Endothelial cell of umbilical vein (primary cell): ENCODE measurements at regions of chr16 and their contacts with region 1.

Region 1: DNA sequence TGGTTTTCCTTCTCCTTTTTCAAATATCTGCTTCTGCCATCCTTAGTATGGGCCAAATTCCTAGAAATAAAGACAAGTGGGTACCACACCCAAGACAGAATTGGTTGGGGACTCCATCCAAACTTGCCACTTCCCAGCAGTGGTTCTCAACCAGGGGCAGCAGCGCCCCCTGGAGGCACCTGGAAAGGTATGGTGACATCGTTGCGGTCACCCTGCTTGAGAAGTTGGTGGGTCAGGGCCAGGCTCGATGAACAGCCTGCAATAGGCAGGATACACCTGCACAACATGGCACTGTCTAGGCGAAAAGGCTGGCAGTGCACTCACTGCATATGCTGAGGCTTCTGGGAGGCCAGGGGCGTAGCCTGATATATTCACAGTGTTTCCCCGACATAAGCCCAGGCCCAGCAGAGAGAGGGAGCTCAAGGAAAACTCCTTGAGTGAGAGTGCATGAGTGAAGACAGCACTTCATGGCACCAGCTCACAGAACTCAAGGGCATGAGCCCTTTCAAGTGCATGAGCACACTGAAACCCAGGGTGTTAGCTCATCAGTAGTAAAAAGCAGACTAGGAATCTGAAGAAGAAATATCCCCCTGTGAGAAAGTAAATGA is 57.7 kb downstream of the CMC2 start:
- DNase-seq: peak; percentile 73
- H3K4me3 ChIP-seq: no peak overlapping the region
- H3K27ac ChIP-seq: peak overlapping the region; percentile 54
- H3K4me1 ChIP-seq: peaks cover 8% of the 10 kb centered on the region
- H3K27me3 ChIP-seq: no peaks in the 10 kb centered on the region
- CTCF ChIP-seq: peak; percentile 82 to 83
- POLR2A ChIP-seq: no peak

Region 2: GRCh38 chr16:80852261-80852872 is 96.6 kb before region 1 on chr16:
- CTCF ChIA-PET with region 1: interaction called, 3 read pairs
- POLR2A ChIA-PET with region 1: no interaction called
- dilution Hi-C with region 1: no loop called
- intact Hi-C with region 1: loop called (anchors 1 kb)
- DNase-seq: peak; percentile 53
- H3K4me3 ChIP-seq: no peak overlapping the region
- H3K27ac ChIP-seq: no peak overlapping the region
- H3K4me1 ChIP-seq: no peaks in the 10 kb centered on the region
- H3K27me3 ChIP-seq: peaks cover 11 to 12% of the 10 kb centered on the region in 2 experiments
- CTCF ChIP-seq: peak; percentile 60 to 66
- POLR2A ChIP-seq: no peak

Region 3: GRCh38 chr16:80931801-80932712 is 16.9 kb before region 1 on chr16:
- CTCF ChIA-PET with region 1: interaction called, 218 read pairs
- POLR2A ChIA-PET with region 1: no interaction called
- dilution Hi-C with region 1: no loop called
- intact Hi-C with region 1: no loop called
- DNase-seq: peak; percentile 59
- H3K4me3 ChIP-seq: peak overlapping the region; percentile 42 to 86 (median 63)
- H3K27ac ChIP-seq: peak overlapping the region; percentile 98
- H3K4me1 ChIP-seq: peaks cover 29% of the 10 kb centered on the region
- H3K27me3 ChIP-seq: no peaks in the 10 kb centered on the region
- CTCF ChIP-seq: peak; percentile 6 to 15
- POLR2A ChIP-seq: peak; percentile 83

Region 4: DNA sequence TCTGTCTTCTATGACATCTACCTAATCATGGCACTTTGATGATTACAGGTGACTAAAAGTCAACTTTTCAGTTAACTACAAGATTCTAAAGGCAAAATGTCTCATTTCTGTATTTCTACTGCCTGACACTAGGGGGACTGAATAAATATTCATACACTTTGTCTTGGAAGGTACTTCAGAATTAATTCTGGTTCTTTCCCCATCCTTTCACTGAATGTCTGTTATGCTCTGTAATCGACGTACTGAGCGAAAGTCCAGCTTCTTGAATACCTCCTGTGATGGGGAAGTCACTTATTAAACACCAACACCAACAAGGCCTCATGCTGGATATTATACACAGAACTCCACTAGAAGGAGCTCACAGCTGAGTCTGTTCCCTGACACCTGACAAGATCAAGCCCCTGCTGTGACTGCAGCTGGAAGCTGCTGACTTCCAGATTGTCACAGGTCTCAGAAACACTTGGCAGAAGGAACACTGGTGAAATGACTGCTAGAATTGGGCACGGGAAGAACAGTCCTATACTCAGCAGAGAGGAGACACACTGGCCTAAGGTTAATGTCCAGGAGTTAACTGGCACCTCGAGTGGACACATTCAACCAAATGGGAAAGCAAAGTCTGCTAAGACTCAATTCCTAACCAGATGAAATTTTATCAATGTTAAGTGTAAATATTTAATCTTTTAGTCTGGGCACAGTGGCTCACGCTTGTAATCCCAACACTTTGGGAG is 25.8 kb after region 1 on chr16:
- CTCF ChIA-PET with region 1: interaction called, 12 read pairs
- POLR2A ChIA-PET with region 1: no interaction called
- dilution Hi-C with region 1: no loop called
- intact Hi-C with region 1: no loop called
- DNase-seq: peak; percentile 15
- H3K4me3 ChIP-seq: no peak overlapping the region
- H3K27ac ChIP-seq: no peak overlapping the region
- H3K4me1 ChIP-seq: no peaks in the 10 kb centered on the region
- H3K27me3 ChIP-seq: no peaks in the 10 kb centered on the region
- CTCF ChIP-seq: peak; percentile 19 to 38
- POLR2A ChIP-seq: no peak